Heart right ventricle (tissue), 16 donors: ENCODE measurements at regions of chr22 and their contacts with region 1.

Region 1: DNA sequence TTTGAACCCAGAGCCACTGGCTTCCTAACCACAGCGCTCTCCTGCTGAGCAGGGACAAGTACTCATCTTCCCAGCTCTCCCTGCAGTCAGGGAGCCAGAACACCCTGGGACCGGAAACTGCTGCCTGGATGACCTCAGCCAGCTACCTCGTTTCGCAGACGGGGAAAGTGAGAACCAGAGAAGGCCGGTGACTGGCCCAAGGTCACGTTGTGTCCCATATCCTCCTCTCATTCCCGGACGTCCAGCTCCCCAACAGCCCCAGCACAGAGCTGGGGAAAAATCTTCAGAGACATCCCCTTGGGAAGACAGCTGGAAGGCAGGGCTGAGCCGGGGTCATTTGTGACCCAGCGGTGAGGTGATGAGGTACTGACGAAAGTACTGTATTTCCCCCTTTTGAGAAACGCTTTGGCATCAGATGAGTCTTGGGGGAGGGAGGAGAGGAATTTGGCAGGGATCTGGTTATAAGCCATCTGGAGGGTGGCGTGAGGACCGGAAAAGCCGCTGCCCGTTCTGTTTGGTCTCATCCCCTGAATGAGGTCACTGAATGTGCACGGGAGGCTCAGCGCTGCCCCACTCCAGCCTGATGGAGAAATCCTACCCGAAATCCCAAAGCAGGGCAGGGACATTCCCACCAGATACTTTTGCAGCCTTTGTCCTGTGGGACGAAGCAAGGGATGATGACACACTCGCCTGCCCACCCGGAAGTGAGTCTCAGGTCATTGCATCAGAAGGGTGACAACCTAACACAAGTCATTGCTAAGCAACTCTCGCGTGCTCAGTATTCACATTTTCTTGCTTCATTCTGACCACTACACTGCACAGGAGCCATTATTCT is 41.1 kb downstream of the LIF start:
- DNase-seq: peak; percentile 52 to 60
- ATAC-seq: peak; percentile 30 to 75 (median 58)
- H3K4me3 ChIP-seq: no peak overlapping the region
- H3K27ac ChIP-seq: peak overlapping the region in 9 of 10 donors; percentile 44 to 92 (median 72)
- H3K4me1 ChIP-seq: peaks cover 2 to 55% (median 37%) of the 10 kb centered on the region in 9 donors
- H3K27me3 ChIP-seq: peaks cover 0 to 83% (median 68%) of the 10 kb centered on the region in 7 donors
- CTCF ChIP-seq: no peak

Region 2: DNA sequence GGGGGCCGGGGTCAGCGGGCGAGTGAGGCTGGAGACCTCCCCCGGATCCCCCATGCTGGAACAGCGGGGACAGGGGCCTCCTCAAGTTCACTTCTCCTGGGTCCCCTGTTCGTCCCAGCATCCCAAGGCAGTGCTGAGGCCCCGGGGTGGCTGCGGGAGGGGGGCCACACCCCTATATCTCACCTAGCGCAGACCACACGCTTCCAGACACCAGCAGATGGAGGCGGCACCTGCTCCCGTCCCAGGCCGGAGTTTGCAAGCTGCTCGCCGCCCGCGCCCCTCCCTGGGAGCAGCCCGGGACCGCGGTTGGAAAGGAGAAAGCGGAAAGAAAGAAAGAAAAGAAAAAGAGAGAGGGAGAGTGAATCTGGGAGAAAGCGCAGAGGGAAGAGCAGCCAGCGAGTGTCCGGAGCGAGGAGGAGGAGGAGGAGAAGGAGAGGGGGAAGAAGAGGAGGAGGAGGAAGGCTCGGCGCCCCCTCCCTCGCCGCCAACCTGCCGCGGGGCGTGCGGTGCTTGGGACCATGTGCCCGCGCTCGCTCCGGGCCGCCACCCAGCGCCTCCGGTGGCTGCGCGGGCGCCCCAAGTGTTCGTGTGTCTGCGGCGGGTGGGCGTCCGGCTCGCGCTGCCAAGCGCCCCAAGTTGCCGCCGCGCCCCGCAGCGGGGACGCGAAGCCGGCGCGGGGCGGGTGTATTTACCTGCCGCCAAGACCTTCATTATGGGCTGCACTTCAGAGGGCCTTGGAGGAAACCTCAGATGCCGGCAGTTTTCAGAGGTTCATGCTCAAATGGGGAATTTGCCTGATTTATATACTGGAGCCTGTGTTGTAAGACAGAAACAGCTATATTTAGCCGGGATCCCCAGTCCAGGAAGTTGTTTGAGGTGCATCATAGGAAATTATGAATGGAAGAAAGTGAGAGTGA is 40.7 kb after region 1 on chr22 and contains the start of gene LIF:
- intact Hi-C with region 1: loop called in 4 of 10 experiments (anchors 5 kb)
- DNase-seq: no peak
- ATAC-seq: peak in 1 of 8 donors; percentile 17
- H3K4me3 ChIP-seq: peak within 1 kb of the TSS; percentile 11 to 60 (median 47)
- H3K27ac ChIP-seq: peak within 1 kb of the TSS in 3 of 10 donors; percentile 12 to 88 (median 34)
- H3K4me1 ChIP-seq: peaks cover 4 to 46% (median 19%) of the 10 kb centered on the region in 9 donors
- H3K27me3 ChIP-seq: peaks cover 3 to 79% (median 69%) of the 10 kb centered on the region in 7 donors
- CTCF ChIP-seq: peak in 2 of 9 donors; percentile 15 to 27
- total RNA-seq, gene LIF: 0.17 to 8.8 (median 0.55) TPM

Region 3: GRCh38 chr22:30381264-30381663 is 175.8 kb after region 1 on chr22:
- intact Hi-C with region 1: no loop called
- DNase-seq: no peak
- ATAC-seq: no peak
- H3K4me3 ChIP-seq: no peak overlapping the region
- H3K27ac ChIP-seq: peak overlapping the region in 1 of 10 donors; percentile 68
- H3K4me1 ChIP-seq: peaks cover 0 to 17% (median 7%) of the 10 kb centered on the region in 9 donors
- H3K27me3 ChIP-seq: no peaks in the 10 kb centered on the region
- CTCF ChIP-seq: no peak

Region 4: GRCh38 chr22:30876915-30877553 is 671.5 kb after region 1 on chr22:
- intact Hi-C with region 1: no loop called
- DNase-seq: peak; percentile 41 to 49
- ATAC-seq: peak in 6 of 8 donors; percentile 19 to 57 (median 45)
- H3K4me3 ChIP-seq: no peak overlapping the region
- H3K27ac ChIP-seq: peak overlapping the region in 5 of 10 donors; percentile 58 to 74 (median 66)
- H3K4me1 ChIP-seq: peaks cover 4 to 67% (median 46%) of the 10 kb centered on the region in 9 donors
- H3K27me3 ChIP-seq: no peaks in the 10 kb centered on the region
- CTCF ChIP-seq: no peak